ENCODE measurements at regions of chr9 and their contacts with region 1.

Region 1: GRCh38 chr9:132250324-132251262 is 88.7 kb downstream of the NTNG2 start:
- DNase-seq: no peak
- ATAC-seq: no peak
- H3K4me3 ChIP-seq: no peak overlapping the region
- H3K4me3 Mint-ChIP-seq: no peak overlapping the region
- H3K27ac ChIP-seq: no peak overlapping the region
- H3K27ac Mint-ChIP-seq: no peak overlapping the region
- H3K4me1 ChIP-seq: peaks cover 0 to 3% of the 10 kb centered on the region in 2 experiments
- H3K4me1 Mint-ChIP-seq: peaks cover 0 to 9% (median 4%) of the 10 kb centered on the region in 3 donors
- H3K27me3 ChIP-seq: peaks cover 0 to 20% of the 10 kb centered on the region in 2 experiments
- H3K27me3 Mint-ChIP-seq: peaks cover 0 to 14% of the 10 kb centered on the region in 2 donors

Region 2: GRCh38 chr9:131762356-131762932 is 488.1 kb before region 1 on chr9:
- CTCF ChIA-PET with region 1: interaction called, 3 to 6 read pairs
- POLR2A ChIA-PET with region 1: interaction called in 1 of 2 experiments, 14 read pairs
- DNase-seq: peak; percentile 27 to 86 (median 66)
- ATAC-seq: peak; percentile 90 to 99 (median 94)
- H3K4me3 ChIP-seq: no peak overlapping the region
- H3K4me3 Mint-ChIP-seq: no peak overlapping the region
- H3K27ac ChIP-seq: no peak overlapping the region
- H3K27ac Mint-ChIP-seq: no peak overlapping the region
- H3K4me1 ChIP-seq: peaks cover 0 to 8% of the 10 kb centered on the region in 2 experiments
- H3K4me1 Mint-ChIP-seq: no peaks in the 10 kb centered on the region
- H3K27me3 ChIP-seq: peaks cover 0 to 19% of the 10 kb centered on the region in 2 experiments
- H3K27me3 Mint-ChIP-seq: peaks cover 8% of the 10 kb centered on the region in 2 donors